ENCODE measurements at regions of chr18 and their contacts with region 1.

Region 1: GRCh38 chr18:50507120-50507590 is 52.7 kb upstream of the MAPK4 start:
- DNase-seq: peak in 4 of 5 donors; percentile 21 to 55 (median 30)
- ATAC-seq: peak; percentile 80 to 91 (median 90)
- H3K4me3 ChIP-seq: no peak overlapping the region
- H3K27ac ChIP-seq: no peak overlapping the region
- H3K4me1 ChIP-seq: no peaks in the 10 kb centered on the region
- H3K27me3 ChIP-seq: no peaks in the 10 kb centered on the region
- CTCF ChIP-seq: peak; percentile 23 to 70 (median 58)
- POLR2A ChIP-seq: no peak

Region 2: DNA sequence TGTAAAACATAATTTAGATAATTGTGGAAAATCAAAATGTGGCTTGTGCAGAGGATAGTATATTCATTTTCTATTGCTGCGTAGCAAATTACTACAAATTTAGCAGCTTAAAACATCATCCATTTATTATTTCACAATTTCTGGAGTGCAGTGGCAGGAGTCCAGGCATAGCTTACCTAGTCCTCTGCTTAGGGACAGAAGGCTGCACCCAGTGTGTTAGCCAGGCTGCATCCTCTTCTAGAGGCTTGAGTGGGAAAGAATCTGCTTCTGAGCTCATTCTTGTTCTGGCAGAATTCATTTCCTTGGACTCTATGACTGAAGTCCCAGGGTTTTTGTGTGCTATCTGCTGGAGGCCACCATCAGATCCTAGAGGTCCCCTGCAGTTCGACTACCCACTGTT is 273.0 kb after region 1 on chr18:
- intact Hi-C with region 1: loop called in 8 of 10 experiments (anchors 1 to 5 kb)
- DNase-seq: no peak
- ATAC-seq: no peak
- H3K4me3 ChIP-seq: no peak overlapping the region
- H3K27ac ChIP-seq: no peak overlapping the region
- H3K4me1 ChIP-seq: no peaks in the 10 kb centered on the region
- H3K27me3 ChIP-seq: no peaks in the 10 kb centered on the region
- CTCF ChIP-seq: no peak
- POLR2A ChIP-seq: no peak

Region 3: DNA sequence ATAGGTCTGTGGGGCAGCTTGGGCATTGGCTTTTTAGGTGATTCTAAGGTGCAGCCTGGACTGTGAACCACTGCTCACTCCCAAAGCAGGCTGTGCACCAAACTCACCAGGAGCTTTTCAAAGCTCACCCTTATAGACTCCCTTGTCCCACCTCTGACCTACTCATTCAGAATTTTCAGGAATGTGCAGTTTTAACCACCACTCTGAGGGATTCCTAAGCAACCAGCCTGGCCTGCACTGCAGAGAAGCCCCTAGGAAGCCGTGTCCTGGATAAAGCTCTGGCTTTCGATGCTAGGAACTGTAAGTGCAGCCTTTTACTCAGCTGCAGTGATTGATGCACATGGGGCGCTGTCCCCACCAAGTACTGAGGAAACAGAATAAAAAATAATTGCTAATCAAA is 279.7 kb after region 1 on chr18:
- intact Hi-C with region 1: loop called (anchors 1 to 5 kb)
- DNase-seq: no peak
- ATAC-seq: no peak
- H3K4me3 ChIP-seq: no peak overlapping the region
- H3K27ac ChIP-seq: no peak overlapping the region
- H3K4me1 ChIP-seq: no peaks in the 10 kb centered on the region
- H3K27me3 ChIP-seq: no peaks in the 10 kb centered on the region
- CTCF ChIP-seq: no peak
- POLR2A ChIP-seq: no peak

Region 4: DNA sequence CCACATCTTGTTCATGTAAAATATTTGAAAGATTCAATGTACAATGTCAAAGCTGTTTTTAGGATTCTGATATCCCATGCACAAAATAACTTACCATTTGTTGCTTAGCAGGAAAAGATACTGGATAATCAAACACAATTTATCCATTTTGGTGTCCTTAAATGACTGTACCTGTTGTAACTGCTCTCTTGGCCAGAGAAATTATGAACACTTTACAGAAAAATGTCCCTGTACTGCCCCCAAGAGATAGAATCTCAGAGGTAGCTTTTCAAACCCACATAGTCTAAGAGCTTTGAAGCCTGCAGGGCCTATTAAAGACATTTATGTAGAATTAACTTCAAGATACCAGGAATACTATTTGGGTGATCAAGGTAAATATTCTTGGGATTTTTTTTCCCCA is 359.6 kb after region 1 on chr18:
- intact Hi-C with region 1: loop called in 2 of 10 experiments (anchors 5 kb)
- DNase-seq: no peak
- ATAC-seq: peak; percentile 51 to 78 (median 69)
- H3K4me3 ChIP-seq: no peak overlapping the region
- H3K27ac ChIP-seq: no peak overlapping the region
- H3K4me1 ChIP-seq: peaks cover 0 to 16% (median 0%) of the 10 kb centered on the region in 12 donors
- H3K27me3 ChIP-seq: no peaks in the 10 kb centered on the region
- CTCF ChIP-seq: peak in 6 of 12 donors; percentile 7 to 38 (median 24)
- POLR2A ChIP-seq: no peak